ENCODE measurements at regions of chr12 and their contacts with region 1.

Region 1: GRCh38 chr12:21831791-21832344 is 57.4 kb upstream of the KCNJ8 start:
- DNase-seq: no peak
- ATAC-seq: peak; percentile 61

Region 2: GRCh38 chr12:21925296-21925913 is 93.5 kb after region 1 on chr12:
- intact Hi-C with region 1: loop called (anchors 10 kb)
- DNase-seq: no peak
- ATAC-seq: no peak

Measured in Right ventricle myocardium superior (tissue), 1 donor.